PC-3 (cell line): ENCODE measurements at regions of chr10 and their contacts with region 1.

Region 1: DNA sequence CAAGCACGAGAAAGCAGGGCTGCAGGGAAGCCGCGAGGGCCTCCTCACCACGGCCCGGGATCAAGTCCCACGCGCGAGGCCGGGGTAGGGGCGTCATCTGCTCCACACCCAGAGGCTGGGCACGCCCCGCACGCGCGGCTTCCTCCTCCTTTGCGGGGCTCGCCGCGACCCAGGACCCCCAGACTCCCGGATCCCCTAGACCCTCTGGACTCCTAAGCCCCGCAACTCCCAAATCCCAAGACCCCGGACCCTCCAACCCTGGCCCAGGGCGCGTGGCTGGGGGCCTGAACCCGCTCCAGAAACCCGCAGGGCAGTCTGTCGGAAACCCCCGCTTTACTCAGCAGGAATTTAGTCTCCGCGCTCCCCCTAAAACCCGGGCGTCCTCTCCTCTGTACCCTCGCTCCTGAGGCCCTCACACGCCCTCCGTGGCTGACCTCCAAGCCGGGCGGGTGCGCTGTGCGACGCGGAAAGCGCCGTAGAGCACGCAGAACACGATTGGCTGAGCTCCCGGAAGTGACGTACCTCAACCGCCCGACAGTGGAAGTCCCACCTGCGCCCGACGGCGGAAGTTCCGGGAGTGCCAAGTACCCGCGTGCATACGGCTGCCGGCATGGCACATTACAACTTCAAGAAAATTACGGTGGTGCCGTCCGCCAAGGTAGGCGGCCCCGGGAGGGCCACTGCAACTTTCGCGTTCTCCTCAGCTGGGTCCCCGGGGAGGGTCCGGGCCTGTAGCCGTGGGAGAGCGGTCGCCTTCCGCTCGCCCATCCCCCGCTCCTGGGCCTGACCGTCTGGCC is at the start of gene GTPBP4:
- DNase-seq: peak; percentile 91
- ATAC-seq: peak; percentile 91
- H3K4me3 ChIP-seq: peak within 1 kb of the TSS; percentile 98
- H3K27ac ChIP-seq: peak within 1 kb of the TSS; percentile 71
- H3K4me1 ChIP-seq: peaks cover 14% of the 10 kb centered on the region
- H3K27me3 ChIP-seq: no peaks in the 10 kb centered on the region
- CTCF ChIP-seq: peak; percentile 45; the same call in 1 of the 2 replicates
- total RNA-seq, gene GTPBP4: 44.6 and 62.0 TPM in 2 replicates

Region 2: DNA sequence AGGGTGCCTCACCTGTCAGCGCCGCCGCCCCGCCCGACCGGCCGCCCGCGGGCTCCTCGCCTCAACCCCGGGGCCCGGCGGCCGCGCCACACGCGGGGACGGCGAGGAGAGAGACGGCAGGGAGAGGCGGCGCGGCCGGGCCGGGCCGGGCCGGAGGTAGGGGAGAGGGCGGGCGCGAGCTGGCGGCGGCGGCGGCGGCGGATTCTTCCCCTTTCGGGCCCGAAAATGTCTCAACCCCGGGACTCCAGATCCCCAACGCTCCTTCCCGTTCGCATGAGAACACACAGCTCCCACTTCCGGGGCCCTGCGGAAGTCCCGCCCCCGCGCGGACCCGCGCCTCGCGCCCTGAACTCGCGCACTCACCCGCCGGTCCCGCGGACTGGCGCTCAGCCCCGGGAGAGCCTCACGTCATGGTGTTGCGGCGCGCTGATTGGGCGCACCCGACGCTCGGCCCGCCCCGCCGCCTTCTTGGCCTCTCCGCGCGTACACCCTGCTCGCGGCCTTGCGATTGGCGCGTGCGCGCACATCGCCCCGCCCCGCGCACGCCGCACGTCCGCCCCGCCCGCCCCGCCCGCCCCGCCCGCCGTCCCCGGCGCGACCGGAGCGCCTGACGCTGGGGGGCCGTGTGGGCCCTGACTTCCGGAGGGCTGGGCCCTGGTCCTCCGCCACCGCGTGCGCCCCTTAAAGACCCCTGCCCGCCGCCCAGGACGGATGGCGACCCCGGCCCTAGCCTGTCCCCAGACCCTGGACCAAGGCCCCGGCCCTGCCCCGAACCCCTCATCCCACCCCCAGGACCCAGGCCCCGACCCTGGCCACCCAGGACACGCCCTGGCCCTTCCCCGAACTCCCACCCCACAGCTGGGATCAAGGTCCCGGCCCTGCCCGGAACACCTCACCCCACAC is 56.4 kb before region 1 on chr10 and contains the start of gene LARP4B:
- CTCF ChIA-PET with region 1: no interaction called
- POLR2A ChIA-PET with region 1: no interaction called
- intact Hi-C with region 1: loop called (anchors 5 kb)
- DNase-seq: peak; percentile 88
- ATAC-seq: peak; percentile 98
- H3K4me3 ChIP-seq: peak within 1 kb of the TSS; percentile 73
- H3K27ac ChIP-seq: no peak within 1 kb of the TSS
- H3K4me1 ChIP-seq: peaks cover 8% of the 10 kb centered on the region; the same call in 1 of the 2 replicates
- H3K27me3 ChIP-seq: no peaks in the 10 kb centered on the region
- CTCF ChIP-seq: no peak
- total RNA-seq, gene LARP4B: 32.7 and 33.9 TPM in 2 replicates

Region 3: DNA sequence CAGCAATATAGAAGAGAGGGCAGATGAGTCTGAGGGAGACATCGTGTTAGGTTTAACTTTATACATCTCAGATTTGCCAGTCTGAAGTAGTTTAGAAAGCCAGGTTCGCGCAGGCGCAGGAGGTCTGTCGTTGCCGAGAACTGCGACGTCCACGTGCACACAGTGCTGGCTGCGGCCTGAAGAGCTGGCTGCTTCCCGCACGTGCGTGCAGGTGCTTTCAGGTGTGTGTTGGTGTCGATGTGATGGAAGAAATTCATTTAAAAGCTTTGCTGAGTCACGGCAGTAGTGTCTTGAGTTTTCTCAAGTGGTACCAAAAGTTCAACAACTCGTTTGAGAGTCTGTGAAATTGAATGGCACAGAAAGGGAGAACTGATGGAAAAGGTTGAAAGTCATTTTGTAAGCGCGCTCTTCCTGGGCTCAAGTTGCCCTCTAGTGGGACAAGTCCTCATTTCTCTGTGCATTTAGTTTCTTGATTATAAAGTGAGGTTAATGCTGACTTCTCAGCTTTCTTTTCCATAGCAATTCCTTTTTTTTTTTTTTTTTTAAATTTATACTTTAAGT is 86.8 kb after region 1 on chr10:
- CTCF ChIA-PET with region 1: no interaction called
- POLR2A ChIA-PET with region 1: no interaction called
- intact Hi-C with region 1: no loop called
- DNase-seq: no peak
- ATAC-seq: no peak
- H3K4me3 ChIP-seq: no peak overlapping the region
- H3K27ac ChIP-seq: no peak overlapping the region
- H3K4me1 ChIP-seq: no peaks in the 10 kb centered on the region
- H3K27me3 ChIP-seq: no peaks in the 10 kb centered on the region
- CTCF ChIP-seq: peak; percentile 29; the same call in 1 of the 2 replicates